ENCODE measurements at regions of chr9 and their contacts with region 1.

Region 1: GRCh38 chr9:109244157-109245132 is 76.4 kb downstream of the EPB41L4B start:
- DNase-seq: peak; percentile 67 to 80 (median 76)
- ATAC-seq: peak; percentile 97
- H3K4me3 ChIP-seq: no peak overlapping the region
- H3K27ac ChIP-seq: no peak overlapping the region
- H3K4me1 ChIP-seq: no peaks in the 10 kb centered on the region
- H3K27me3 ChIP-seq: peaks cover 5 to 9% of the 10 kb centered on the region in 2 experiments; a peak in 1 of 5 replicates
- CTCF ChIP-seq: peak; percentile 75 to 90 (median 78)
- EP300 ChIP-seq: no peak
- POLR2A ChIP-seq: no peak
- RAD21 ChIP-seq: peak; percentile 28 to 66; a peak in 3 of 4 replicates

Region 2: DNA sequence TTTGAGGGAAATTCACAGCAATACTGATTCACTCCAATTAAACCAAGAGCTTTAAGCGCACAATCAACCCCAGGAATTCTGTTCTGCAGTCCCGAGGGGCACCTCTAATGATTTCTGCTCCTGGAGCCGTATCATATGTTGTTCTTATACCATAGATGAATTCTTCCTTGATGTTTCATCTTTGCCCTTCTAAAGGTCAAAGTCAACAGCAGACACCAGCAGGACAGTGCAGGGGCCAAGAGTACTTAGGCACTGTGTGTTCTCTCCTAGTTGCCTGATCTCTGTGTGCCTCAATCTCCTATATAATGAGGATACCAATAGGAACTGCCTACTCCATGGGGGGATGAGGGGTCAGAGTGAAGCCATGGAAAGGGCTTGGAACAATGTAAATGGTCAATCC is 59.9 kb after region 1 on chr9:
- CTCF ChIA-PET with region 1: no interaction called
- POLR2A ChIA-PET with region 1: no interaction called
- in situ Hi-C with region 1: no loop called
- intact Hi-C with region 1: loop called (anchors 5 kb)
- DNase-seq: no peak
- ATAC-seq: no peak
- H3K4me3 ChIP-seq: no peak overlapping the region
- H3K27ac ChIP-seq: no peak overlapping the region
- H3K4me1 ChIP-seq: no peaks in the 10 kb centered on the region
- H3K27me3 ChIP-seq: peaks cover 38 to 48% of the 10 kb centered on the region in 2 experiments; a peak in 4 of 5 replicates
- CTCF ChIP-seq: no peak
- EP300 ChIP-seq: no peak
- POLR2A ChIP-seq: no peak
- RAD21 ChIP-seq: no peak

Region 3: GRCh38 chr9:109520478-109521132 is 276.2 kb after region 1 on chr9:
- CTCF ChIA-PET with region 1: no interaction called
- POLR2A ChIA-PET with region 1: no interaction called
- in situ Hi-C with region 1: no loop called
- intact Hi-C with region 1: loop called (anchors 1 kb)
- DNase-seq: peak; percentile 64 to 73 (median 71)
- ATAC-seq: peak; percentile 98
- H3K4me3 ChIP-seq: no peak overlapping the region
- H3K27ac ChIP-seq: no peak overlapping the region
- H3K4me1 ChIP-seq: no peaks in the 10 kb centered on the region
- H3K27me3 ChIP-seq: no peaks in the 10 kb centered on the region; a peak in 1 of 5 replicates
- CTCF ChIP-seq: peak; percentile 78 to 86 (median 84)
- EP300 ChIP-seq: no peak
- POLR2A ChIP-seq: no peak
- RAD21 ChIP-seq: peak; percentile 64 to 81

Measured in K562 (cell line).